ENCODE measurements at regions of chr3 and their contacts with region 1.

Region 1: DNA sequence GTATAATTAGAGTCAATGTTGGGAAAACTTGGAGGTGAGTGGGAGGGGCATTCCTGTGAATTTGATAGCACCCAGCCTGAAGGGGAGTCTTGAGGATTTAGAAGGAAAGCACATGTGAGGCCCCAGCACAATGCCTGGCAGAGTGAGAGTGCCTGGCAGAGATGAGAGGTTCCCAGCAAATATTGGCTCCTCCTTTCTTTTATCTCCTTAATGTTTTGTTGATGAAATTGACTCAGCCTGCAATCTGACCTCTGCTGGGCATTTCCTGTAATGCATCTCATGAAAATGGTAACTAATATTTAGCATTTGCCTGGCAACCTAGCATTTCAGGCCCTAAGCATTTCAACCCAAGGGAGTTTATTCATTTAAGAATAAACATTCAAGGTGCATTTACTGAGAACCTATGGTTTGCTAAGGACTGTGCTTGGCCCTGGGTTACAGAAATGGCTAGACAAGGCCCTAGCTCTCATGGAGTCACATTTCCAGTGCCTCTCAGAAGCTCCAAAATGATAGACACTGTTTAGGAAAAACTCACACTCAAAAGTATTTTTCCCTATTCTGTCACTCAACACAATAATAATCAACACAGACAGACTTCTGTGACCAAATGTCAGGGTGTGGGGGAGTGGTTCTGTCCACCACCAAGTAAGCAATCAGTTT is 19.0 kb downstream of the PDHB start:
- H3K4me3 Mint-ChIP-seq: no peak overlapping the region
- H3K27ac Mint-ChIP-seq: no peak overlapping the region
- H3K4me1 Mint-ChIP-seq: peaks cover 20% of the 10 kb centered on the region
- H3K27me3 Mint-ChIP-seq: no peaks in the 10 kb centered on the region

Region 2: GRCh38 chr3:58177747-58178527 is 236.7 kb before region 1 on chr3:
- intact Hi-C with region 1: loop called (anchors 10 kb)
- H3K4me3 Mint-ChIP-seq: peak overlapping the region; percentile 71
- H3K27ac Mint-ChIP-seq: peak overlapping the region; percentile 63
- H3K4me1 Mint-ChIP-seq: peaks cover 41% of the 10 kb centered on the region
- H3K27me3 Mint-ChIP-seq: peaks cover 24% of the 10 kb centered on the region

Region 3: DNA sequence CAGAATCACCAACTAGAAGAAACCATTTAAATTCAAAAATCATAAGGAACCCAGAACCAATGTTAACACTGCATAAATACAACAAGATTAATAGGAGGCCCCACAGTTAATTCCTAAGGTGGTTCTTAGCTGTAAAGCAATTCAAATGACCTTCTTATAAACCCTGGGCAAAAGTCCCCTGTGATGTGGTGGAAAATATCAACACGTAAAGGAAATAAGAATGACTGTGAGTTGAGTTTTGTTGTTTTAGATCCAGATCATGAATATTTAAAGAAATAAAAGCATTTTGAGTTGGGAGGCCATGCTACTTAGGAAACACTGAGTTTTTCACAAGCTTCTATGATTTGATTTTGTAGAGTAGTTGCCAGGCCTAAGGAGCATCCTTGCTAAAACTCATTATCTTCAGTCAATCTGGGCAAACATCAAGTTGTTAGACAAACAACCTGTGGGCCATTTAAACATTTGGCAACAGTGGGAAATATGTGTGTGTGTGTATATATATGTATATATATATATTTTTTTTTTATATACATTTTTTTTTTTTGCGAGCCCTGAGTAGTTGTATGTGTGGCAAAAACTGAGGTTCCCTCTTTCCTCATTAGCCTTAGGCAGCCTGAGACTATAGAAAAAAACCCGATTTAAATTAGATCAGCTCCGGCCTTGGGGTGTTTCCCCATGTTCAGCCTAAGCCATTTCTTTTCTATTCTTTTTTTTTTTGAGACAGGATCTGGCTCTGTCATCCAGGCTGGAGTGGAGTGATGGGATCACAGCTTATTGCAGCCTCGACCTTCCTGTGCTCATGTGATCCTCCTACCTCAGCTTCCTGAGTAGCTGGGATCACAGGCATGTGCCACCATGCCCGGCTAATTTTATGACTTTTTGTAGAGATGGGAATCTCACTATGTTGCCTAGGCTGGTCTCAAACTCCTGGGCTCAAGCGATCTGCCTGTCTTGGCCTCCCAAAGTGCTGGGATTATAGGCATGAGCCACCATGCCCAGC is 90.0 kb before region 1 on chr3:
- intact Hi-C with region 1: loop called (anchors 1 kb)
- H3K4me3 Mint-ChIP-seq: no peak overlapping the region
- H3K27ac Mint-ChIP-seq: no peak overlapping the region
- H3K4me1 Mint-ChIP-seq: peaks cover 12% of the 10 kb centered on the region
- H3K27me3 Mint-ChIP-seq: no peaks in the 10 kb centered on the region

Measured in dendritic cell treated with granulocyte-macrophage colony-stimulating factor and Interleukin-4, amounts not matched to agents 40 ng/mL and 50 ng/mL, for 4 days (primary cell).